ENCODE measurements at regions of chr1 and their contacts with region 1.

Region 1: GRCh38 chr1:27332536-27333281 is 9.1 kb upstream of the SYTL1 start:
- DNase-seq: peak; percentile 69
- H3K4me3 Mint-ChIP-seq: no peak overlapping the region
- H3K27ac Mint-ChIP-seq: no peak overlapping the region
- H3K4me1 Mint-ChIP-seq: peaks cover 24% of the 10 kb centered on the region
- H3K27me3 Mint-ChIP-seq: no peaks in the 10 kb centered on the region

Region 2: GRCh38 chr1:26645734-26646133 is 687.0 kb before region 1 on chr1:
- CTCF ChIA-PET with region 1: no interaction called
- POLR2A ChIA-PET with region 1: no interaction called
- intact Hi-C with region 1: no loop called
- DNase-seq: no peak
- H3K4me3 Mint-ChIP-seq: no peak overlapping the region
- H3K27ac Mint-ChIP-seq: no peak overlapping the region
- H3K4me1 Mint-ChIP-seq: no peaks in the 10 kb centered on the region
- H3K27me3 Mint-ChIP-seq: no peaks in the 10 kb centered on the region

Region 3: DNA sequence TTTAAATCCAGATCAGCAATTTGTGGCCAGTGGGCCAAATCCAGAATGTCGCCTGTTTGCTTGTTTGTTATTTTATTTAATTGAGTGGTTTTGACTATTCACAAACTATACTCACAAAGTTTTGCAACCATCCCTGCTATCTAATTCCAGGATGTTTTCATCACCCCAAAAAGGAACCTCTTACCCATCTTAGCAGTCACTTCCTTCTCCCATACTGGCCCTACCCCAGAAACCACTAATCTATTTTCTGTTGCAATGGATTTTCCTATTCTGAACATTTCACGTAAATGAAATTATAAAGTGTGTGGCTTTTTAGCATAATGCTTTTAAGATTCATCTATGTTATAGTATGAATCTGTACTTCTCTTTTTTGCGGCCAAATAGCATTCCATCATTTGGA is 57.0 kb before region 1 on chr1:
- CTCF ChIA-PET with region 1: no interaction called
- POLR2A ChIA-PET with region 1: no interaction called
- intact Hi-C with region 1: no loop called
- DNase-seq: no peak
- H3K4me3 Mint-ChIP-seq: no peak overlapping the region
- H3K27ac Mint-ChIP-seq: no peak overlapping the region
- H3K4me1 Mint-ChIP-seq: peaks cover 5% of the 10 kb centered on the region
- H3K27me3 Mint-ChIP-seq: no peaks in the 10 kb centered on the region

Region 4: DNA sequence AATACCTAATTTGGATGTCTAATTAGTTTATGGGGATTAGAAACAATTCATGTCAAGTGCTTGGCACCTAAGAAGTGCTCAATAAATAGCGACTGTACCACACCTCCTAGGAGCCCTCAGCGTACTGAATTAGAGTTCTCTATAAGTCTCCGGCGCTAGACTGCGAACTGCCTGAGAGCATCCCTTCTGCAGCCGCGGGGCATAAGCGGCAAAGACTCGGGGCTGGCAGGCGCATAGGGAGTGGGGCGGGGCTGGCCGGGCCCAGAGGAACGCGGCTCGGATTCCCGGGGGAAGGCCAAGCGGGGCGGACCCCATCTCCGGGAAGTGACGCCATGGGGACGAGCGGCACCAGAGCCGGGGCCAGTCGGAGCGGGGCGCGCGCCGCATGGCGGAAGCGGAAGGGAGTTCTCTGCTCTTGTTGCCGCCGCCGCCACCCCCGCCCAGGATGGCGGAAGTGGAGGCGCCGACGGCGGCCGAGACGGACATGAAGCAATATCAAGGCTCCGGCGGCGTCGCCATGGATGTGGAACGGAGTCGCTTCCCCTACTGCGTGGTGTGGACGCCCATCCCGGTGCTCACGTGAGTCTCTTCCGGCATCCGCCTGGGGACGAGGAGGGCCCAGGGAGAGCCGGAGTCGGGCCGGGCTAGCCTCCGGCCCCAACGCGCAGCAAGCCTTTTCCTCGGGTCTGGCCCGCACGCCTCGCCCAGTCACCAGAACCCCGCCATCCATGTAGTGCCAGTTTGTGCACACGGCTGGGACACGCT is 10.7 kb before region 1 on chr1 and contains the start of gene TMEM222:
- CTCF ChIA-PET with region 1: interaction called, 20 read pairs
- POLR2A ChIA-PET with region 1: interaction called, 3 read pairs
- intact Hi-C with region 1: no loop called
- DNase-seq: peak; percentile 98
- H3K4me3 Mint-ChIP-seq: peak within 1 kb of the TSS; percentile 96
- H3K27ac Mint-ChIP-seq: peak within 1 kb of the TSS; percentile 82
- H3K4me1 Mint-ChIP-seq: peaks cover 41% of the 10 kb centered on the region
- H3K27me3 Mint-ChIP-seq: no peaks in the 10 kb centered on the region
- total RNA-seq, gene TMEM222: 22.8 to 24.6 TPM

Region 5: DNA sequence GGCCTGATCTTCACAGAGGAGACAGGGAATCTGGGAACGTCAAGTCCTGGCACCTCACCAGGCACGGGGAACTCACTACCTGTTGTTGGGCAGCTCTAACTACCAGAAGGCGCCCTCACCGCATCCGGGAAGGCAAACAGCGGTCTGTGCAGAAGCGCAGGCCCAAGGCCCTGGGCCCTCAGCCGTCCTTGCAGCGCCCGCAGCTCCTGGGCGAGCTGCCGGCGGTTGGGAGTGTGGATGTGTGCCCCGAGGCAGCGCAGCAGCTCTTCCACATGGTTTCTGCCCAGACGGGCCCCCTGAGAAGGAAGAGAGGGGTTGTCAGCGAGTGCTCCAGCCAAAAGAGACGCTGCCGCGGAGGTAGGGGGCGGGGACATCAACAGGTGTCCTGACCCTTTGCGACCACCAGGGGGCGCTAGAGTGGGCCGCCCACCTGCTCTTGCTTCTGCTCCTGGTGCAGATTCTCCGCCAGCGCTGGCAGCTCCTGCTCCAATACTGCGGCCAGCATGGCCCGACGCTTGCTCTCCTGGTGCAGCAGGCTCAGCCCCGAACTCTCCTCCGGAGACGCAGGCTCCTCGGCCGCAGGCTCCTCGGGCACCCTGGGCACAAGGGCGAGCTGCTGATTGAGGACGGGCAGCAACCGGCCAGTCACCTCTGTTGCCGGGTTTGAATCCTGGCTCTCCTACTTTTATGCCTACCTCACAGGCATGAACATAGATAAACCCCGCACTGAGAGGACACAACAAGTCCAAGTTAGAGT is 24.8 kb after region 1 on chr1:
- CTCF ChIA-PET with region 1: interaction called, 80 read pairs
- POLR2A ChIA-PET with region 1: no interaction called
- intact Hi-C with region 1: no loop called
- DNase-seq: peak; percentile 89
- H3K4me3 Mint-ChIP-seq: peak overlapping the region; percentile 68
- H3K27ac Mint-ChIP-seq: peak overlapping the region; percentile 81
- H3K4me1 Mint-ChIP-seq: peaks cover 43% of the 10 kb centered on the region
- H3K27me3 Mint-ChIP-seq: no peaks in the 10 kb centered on the region

Region 6: GRCh38 chr1:27372808-27373690 is 40.3 kb after region 1 on chr1:
- CTCF ChIA-PET with region 1: interaction called, 17 read pairs
- POLR2A ChIA-PET with region 1: no interaction called
- intact Hi-C with region 1: no loop called
- DNase-seq: no peak
- H3K4me3 Mint-ChIP-seq: no peak overlapping the region
- H3K27ac Mint-ChIP-seq: no peak overlapping the region
- H3K4me1 Mint-ChIP-seq: peaks cover 4% of the 10 kb centered on the region
- H3K27me3 Mint-ChIP-seq: no peaks in the 10 kb centered on the region

Measured in activated CD4-positive, alpha-beta memory T cell treated with anti-CD3 and anti-CD28 coated beads for 36 hours (primary cell).